Right ventricle myocardium superior (tissue), 1 donor: ENCODE measurements at regions of chr18 and their contacts with region 1.

Region 1: DNA sequence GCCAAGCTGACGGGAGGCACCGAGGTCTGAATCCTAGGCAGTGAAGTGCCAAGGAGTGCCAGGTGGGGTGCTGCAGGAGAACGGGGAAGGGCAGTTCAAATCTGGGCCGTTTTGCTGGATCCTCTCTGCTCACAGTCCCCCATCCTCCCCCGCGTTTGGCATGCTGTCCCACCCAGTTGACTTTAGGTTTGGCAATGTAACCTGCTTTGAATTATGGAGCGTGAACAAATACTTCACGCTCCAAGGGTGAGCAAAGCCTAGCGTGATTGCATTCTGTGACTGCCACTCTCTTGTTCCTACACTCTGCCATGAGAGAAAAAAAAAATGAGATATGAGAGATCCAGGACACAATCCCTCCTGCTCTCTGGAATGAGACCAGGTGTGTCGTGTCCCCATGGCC is 381.9 kb downstream of the ZNF516 start:
- DNase-seq: no peak
- ATAC-seq: no peak

Region 2: DNA sequence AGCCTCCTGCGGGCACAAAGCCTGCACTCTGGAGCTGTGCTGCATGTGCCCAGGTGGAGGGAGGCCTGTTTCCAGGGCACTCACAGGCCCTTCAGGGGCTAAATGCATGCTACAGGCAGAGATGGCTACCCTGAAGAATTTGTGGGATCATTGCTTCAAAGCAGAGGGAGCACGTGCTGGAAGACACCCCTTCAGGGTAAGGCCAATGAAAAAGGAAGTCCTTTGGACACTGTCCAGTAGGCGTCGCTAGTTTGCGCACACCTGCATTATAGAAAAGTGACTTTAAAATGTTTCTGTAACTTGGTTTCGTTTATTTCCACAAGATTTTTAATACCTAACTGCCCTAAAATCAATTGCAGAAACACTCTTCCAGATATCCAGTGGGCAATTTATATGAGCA is 56.6 kb after region 1 on chr18:
- intact Hi-C with region 1: loop called (anchors 10 kb)
- DNase-seq: no peak
- ATAC-seq: no peak